GM10248 (cell line): ENCODE measurements at regions of chr2 and their contacts with region 1.

Region 1: GRCh38 chr2:55168221-55169154 is 63.6 kb downstream of the CLHC1 start:
- DNase-seq: peak; percentile 42
- CTCF ChIP-seq: peak; percentile 49

Region 2: GRCh38 chr2:55026202-55026601 is 142.3 kb before region 1 on chr2:
- CTCF ChIA-PET with region 1: interaction called, 12 read pairs
- POLR2A ChIA-PET with region 1: no interaction called
- DNase-seq: no peak
- CTCF ChIP-seq: no peak

Region 3: DNA sequence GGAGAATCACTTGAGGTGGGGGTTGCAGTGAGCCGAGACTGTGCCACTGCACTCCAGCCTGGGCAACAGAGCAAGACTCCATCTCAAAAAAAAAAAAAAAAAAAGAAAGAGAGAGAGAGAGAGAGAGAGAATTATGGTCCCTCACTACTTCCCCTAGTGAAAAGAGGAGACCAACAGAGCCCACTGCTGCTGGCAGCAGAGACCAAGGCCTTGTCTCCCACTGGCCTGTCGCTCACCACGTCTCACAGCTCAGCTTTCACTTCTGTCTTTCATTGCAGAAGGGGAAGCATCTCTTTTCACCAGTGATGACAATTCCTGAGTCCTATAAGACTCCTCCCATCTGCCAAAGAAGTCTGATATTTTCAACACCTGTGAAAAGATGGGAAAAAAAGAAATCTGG is 17.7 kb before region 1 on chr2:
- CTCF ChIA-PET with region 1: interaction called, 56 read pairs
- POLR2A ChIA-PET with region 1: no interaction called
- DNase-seq: peak; percentile 64
- CTCF ChIP-seq: no peak